HepG2 (cell line): ENCODE measurements at regions of chr13 and their contacts with region 1.

Region 1: DNA sequence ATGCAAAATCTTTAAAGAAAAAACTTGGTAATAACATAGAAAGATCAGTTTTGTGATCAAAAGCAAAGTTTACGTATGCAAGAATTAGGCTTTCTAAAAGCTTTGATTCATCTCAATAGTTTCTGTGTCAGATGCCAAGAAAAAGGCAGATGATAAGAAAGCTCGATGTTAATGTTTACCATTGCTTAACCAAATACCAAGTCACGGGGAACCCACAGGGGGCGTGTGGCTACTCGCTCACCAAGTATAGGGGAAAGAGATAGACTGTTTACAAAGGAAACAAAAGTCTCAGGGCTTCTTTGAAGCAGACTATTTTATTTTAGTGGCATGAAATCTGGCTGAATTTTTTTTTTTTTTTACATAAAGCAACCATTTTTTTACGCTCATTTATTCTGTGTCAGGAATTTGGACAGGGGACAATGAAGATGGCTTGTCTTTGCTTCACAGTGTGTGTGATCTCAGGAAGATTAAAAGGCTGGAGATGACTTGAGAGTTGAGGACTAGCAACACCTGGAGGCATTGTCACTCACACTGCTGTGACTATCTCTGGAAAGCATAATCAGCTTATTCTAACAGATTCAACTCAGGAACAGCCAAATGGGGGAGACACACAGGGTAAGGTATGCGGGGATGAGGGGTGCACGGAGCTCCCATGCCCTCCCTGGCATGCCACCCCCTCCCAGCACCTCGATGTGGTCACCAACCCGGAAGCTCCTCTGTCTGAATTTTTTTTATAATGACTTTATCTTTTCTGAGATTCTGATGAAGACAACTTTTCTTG is 24.9 kb downstream of the RCBTB1 start:
- DNase-seq: peak; percentile 68
- ATAC-seq: peak; percentile 97
- H3K4me3 ChIP-seq: no peak overlapping the region
- H3K27ac ChIP-seq: peak overlapping the region; percentile 32
- H3K4me1 ChIP-seq: peaks cover 18% of the 10 kb centered on the region
- H3K27me3 ChIP-seq: no peaks in the 10 kb centered on the region
- CTCF ChIP-seq: peak; percentile 56
- EP300 ChIP-seq: peak in 1 of 2 experiments; percentile 37; a peak in 1 of 4 replicates
- POLR2A ChIP-seq: no peak
- RAD21 ChIP-seq: no peak

Region 2: DNA sequence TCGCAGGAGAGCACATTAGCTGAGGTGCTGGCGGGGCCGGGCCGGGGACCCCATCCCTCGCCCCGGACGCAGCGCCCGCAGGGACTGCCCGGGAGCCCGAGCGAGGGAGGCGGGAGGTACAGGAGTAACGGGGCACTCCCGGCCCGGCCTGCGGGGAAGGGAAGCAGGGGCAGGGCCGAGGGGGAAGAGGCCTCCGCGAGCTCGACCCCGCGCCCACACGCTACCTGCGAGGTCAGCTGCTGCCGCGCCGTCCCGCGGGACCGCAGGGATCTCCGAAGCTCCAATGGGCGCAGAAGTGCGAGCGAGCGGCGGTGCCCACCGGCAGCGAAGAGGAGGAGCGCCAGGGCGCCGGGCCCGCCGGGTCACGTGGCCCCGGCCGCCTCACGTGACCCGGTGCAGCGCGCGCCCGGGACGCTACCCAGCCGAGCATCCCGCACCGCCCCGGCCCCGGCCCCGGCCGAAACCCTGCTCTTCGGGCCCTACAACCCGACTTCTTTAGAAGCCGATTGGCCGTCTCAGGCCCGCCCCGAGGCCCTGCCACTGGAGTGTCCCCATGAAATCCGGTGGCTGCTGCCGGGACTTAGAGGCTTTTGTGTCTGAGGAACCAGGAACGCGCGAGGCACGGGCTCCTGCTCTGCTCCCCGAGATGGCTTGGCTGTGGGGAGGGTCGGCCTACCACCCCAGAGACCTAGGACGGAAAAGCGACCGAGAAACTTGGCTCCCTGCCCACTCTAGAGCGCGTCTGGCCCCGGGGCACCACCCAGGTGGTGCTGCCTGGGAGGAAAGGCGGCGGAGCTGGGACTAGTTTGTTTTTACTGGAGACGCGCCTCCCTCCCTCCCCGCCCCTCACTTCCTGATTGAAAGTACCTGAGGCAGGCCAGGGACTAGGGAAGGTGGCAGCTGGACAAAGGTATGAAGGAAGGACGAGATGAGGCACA is 25.0 kb after region 1 on chr13 and contains the start of gene RCBTB1:
- CTCF ChIA-PET with region 1: no interaction called
- POLR2A ChIA-PET with region 1: interaction called, 3 read pairs
- in situ Hi-C with region 1: no loop called
- intact Hi-C with region 1: loop called (anchors 1 kb)
- DNase-seq: peak; percentile 52
- ATAC-seq: peak; percentile 92
- H3K4me3 ChIP-seq: peak within 1 kb of the TSS; percentile 82 to 93 (median 89)
- H3K27ac ChIP-seq: peak within 1 kb of the TSS; percentile 69
- H3K4me1 ChIP-seq: peaks cover 61% of the 10 kb centered on the region
- H3K27me3 ChIP-seq: no peaks in the 10 kb centered on the region; a peak in 1 of 5 replicates
- CTCF ChIP-seq: no peak; the same call in 1 of the 2 replicates
- EP300 ChIP-seq: no peak
- POLR2A ChIP-seq: peak; percentile 34 to 62; a peak in 3 of 4 replicates
- RAD21 ChIP-seq: no peak
- total RNA-seq, gene RCBTB1: 21.6 and 28.3 TPM in 2 replicates

Region 3: DNA sequence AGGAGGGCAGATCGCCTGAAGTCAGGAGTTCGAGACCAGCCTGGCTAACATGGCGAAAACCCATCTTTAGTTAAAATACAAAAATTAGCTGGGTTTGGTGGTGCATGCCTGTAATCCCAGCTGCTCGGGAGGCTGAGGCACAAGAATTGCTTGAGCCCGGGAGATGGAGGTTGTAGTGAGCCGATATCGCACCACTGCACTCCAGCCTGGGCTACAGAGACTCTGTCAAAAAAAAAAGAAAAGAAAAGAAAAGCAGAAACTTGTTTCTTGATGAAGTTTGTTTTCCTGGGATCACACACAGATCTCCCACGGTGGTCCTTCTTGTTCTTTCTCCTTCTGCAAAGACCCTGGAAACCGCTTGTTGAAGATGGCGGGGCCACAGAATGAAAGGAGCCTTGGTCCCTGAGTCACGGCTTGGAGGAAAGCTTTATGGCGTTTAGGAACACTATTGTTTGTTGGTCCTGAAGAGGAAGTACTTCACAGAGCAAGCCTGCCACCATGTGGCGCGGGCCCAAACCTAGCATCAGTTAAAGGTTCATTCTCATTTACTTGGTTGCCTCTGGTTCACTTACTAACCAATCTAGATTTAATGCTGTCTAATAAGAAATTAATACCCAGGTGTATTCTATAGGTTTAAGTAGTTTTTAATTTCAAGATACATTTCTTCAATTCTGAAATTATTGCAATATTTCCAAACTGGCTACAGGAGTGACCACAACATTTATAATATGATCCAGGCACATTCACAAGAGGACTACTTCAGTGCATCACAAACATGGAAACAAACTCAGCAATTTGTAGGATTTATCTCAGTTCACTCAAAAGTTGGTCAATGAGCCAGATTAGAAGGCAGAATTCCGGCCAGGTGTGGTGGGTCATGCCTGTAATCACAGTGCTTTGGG is 46.5 kb after region 1 on chr13:
- CTCF ChIA-PET with region 1: interaction called, 35 read pairs
- POLR2A ChIA-PET with region 1: interaction called, 3 read pairs
- in situ Hi-C with region 1: no loop called
- intact Hi-C with region 1: loop called (anchors 1 kb)
- DNase-seq: peak; percentile 77
- ATAC-seq: peak; percentile 96
- H3K4me3 ChIP-seq: peak overlapping the region; percentile 31 to 67 (median 62); a peak in 5 of 6 replicates
- H3K27ac ChIP-seq: no peak overlapping the region
- H3K4me1 ChIP-seq: peaks cover 32% of the 10 kb centered on the region
- H3K27me3 ChIP-seq: no peaks in the 10 kb centered on the region
- CTCF ChIP-seq: peak; percentile 91
- EP300 ChIP-seq: no peak
- POLR2A ChIP-seq: no peak
- RAD21 ChIP-seq: peak; percentile 88